CD4-positive, alpha-beta memory T cell (primary cell): ENCODE measurements at regions of chr6 and their contacts with region 1.

Region 1: GRCh38 chr6:83615025-83615999 is 93.6 kb downstream of the SNAP91 start:
- DNase-seq: peak in 3 of 5 donors; percentile 5 to 8 (median 6)
- H3K4me3 ChIP-seq: no peak overlapping the region
- H3K4me3 Mint-ChIP-seq: no peak overlapping the region
- H3K27ac ChIP-seq: no peak overlapping the region
- H3K27ac Mint-ChIP-seq: no peak overlapping the region
- H3K4me1 ChIP-seq: no peaks in the 10 kb centered on the region
- H3K4me1 Mint-ChIP-seq: no peaks in the 10 kb centered on the region
- H3K27me3 ChIP-seq: no peaks in the 10 kb centered on the region
- H3K27me3 Mint-ChIP-seq: no peaks in the 10 kb centered on the region

Region 2: GRCh38 chr6:83804886-83805285 is 189.6 kb after region 1 on chr6:
- CTCF ChIA-PET with region 1: no interaction called
- POLR2A ChIA-PET with region 1: no interaction called
- intact Hi-C with region 1: no loop called
- DNase-seq: no peak
- H3K4me3 ChIP-seq: no peak overlapping the region
- H3K4me3 Mint-ChIP-seq: no peak overlapping the region
- H3K27ac ChIP-seq: no peak overlapping the region
- H3K27ac Mint-ChIP-seq: no peak overlapping the region
- H3K4me1 ChIP-seq: no peaks in the 10 kb centered on the region
- H3K4me1 Mint-ChIP-seq: no peaks in the 10 kb centered on the region
- H3K27me3 ChIP-seq: no peaks in the 10 kb centered on the region
- H3K27me3 Mint-ChIP-seq: peaks cover 0 to 2% of the 10 kb centered on the region in 2 donors

Region 3: DNA sequence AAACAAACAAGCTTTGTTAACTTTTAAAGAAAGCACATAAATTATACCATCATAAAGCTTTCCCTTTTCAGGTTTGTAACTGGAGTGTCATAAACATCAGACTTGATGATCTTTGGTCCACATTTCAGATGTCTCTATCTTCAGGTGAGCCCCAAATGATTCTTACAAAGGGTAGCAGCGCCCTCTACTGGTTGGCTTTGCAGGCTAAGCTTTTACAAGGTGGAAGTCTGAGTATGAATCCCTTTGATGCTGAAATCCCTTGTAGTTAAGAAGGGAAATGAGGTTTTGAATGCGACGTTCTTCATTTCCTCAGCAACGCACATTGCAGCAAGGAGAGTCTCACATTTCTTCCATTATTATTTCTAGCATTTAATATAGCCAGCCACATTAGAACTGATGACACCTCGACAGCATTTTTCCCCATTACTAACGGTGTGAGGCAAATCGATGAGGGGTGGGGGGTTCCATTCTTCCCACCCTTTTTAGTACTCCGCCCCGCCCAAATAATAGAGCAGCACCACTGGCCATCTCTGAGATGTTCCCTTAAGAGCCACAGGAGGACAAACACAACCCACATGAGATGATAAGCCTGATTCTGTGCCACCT is 1708.2 kb after region 1 on chr6:
- CTCF ChIA-PET with region 1: interaction called, 10 read pairs
- POLR2A ChIA-PET with region 1: no interaction called
- intact Hi-C with region 1: no loop called
- DNase-seq: peak; percentile 40 to 53 (median 47)
- H3K4me3 ChIP-seq: no peak overlapping the region
- H3K4me3 Mint-ChIP-seq: no peak overlapping the region
- H3K27ac ChIP-seq: no peak overlapping the region
- H3K27ac Mint-ChIP-seq: no peak overlapping the region
- H3K4me1 ChIP-seq: no peaks in the 10 kb centered on the region
- H3K4me1 Mint-ChIP-seq: no peaks in the 10 kb centered on the region
- H3K27me3 ChIP-seq: no peaks in the 10 kb centered on the region
- H3K27me3 Mint-ChIP-seq: peaks cover 8 to 11% of the 10 kb centered on the region in 2 donors